CD14-positive monocyte (primary cell): ENCODE measurements at regions of chr6 and their contacts with region 1.

Region 1: DNA sequence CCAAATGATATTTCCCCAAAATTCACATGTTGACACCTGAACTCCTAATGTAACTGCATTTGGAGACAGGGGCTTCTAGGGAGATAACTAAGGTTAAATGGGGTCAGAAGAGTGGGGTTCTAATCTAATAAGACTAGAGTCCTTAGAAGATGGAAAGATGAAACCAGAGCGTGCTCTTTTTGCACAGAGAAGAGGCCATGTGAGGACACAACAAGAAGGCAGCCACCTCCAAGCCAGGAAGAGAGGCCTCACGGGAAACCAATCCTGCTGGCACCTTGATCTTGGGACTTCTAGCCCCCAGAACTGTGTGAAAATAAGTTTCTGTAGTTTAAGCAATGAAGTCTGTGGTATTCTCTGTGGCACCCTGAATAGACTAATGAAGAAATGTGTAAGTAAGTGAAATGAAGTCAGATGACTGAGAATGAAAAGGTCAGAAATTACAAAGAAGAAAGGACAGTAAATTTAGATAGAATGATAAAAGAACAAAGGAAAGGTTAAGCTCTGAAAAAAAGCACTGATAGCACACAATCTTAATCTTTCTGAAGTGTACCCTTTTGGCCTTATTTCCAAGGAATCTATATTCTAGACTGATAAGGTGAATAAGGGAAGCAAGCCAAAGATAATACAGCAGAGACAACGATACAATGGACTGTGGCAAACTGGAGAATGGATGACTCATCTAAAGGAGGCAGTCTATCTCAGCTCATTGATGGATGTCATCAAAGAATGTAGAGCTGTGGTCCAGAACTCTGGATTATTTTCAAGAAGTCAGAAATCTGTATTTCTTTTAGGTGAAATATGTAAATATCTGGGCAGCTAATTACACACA is 110.4 kb downstream of the MYB start:
- DNase-seq: no peak
- H3K4me3 ChIP-seq: no peak overlapping the region
- H3K4me3 Mint-ChIP-seq: no peak overlapping the region
- H3K27ac ChIP-seq: no peak overlapping the region
- H3K27ac Mint-ChIP-seq: no peak overlapping the region
- H3K4me1 ChIP-seq: peaks cover 10 to 15% of the 10 kb centered on the region in 2 donors
- H3K4me1 Mint-ChIP-seq: peaks cover 20% of the 10 kb centered on the region
- H3K27me3 ChIP-seq: no peaks in the 10 kb centered on the region
- H3K27me3 Mint-ChIP-seq: no peaks in the 10 kb centered on the region
- CTCF ChIP-seq: no peak

Region 2: DNA sequence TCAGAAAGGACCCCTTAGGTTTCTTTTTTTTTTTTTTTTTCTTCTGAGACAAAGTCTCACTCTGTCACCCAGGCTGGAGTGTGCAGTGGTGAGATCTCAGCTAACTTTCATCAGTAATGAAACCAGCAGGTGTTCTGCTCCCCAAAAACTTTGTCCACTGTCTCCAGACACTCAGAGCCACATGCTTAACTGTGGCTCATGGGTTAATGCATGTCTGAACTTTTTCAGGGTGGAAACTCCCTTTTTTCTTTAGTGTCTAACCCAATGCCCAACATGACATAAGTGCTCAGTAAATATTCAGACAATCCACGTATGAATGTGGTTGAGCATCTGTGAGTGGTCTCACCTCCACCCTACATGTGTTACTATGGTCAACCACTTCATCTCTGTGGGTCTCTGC is 65.0 kb before region 1 on chr6:
- intact Hi-C with region 1: loop called in 1 of 2 experiments (anchors 10 kb)
- DNase-seq: no peak
- H3K4me3 ChIP-seq: no peak overlapping the region
- H3K4me3 Mint-ChIP-seq: no peak overlapping the region
- H3K27ac ChIP-seq: no peak overlapping the region
- H3K27ac Mint-ChIP-seq: no peak overlapping the region
- H3K4me1 ChIP-seq: peaks cover 17 to 18% of the 10 kb centered on the region in 2 donors
- H3K4me1 Mint-ChIP-seq: peaks cover 40% of the 10 kb centered on the region
- H3K27me3 ChIP-seq: no peaks in the 10 kb centered on the region
- H3K27me3 Mint-ChIP-seq: peaks cover 0 to 1% (median 1%) of the 10 kb centered on the region in 3 donors
- CTCF ChIP-seq: no peak